IMR-90 (cell line): ENCODE measurements at regions of chr6 and their contacts with region 1.

Region 1: GRCh38 chr6:28443112-28443773 is at the start of gene ZSCAN23:
- DNase-seq: peak; percentile 92
- ATAC-seq: peak; percentile 91
- H3K4me3 ChIP-seq: peak within 1 kb of the TSS; percentile 91
- H3K27ac ChIP-seq: peak within 1 kb of the TSS; percentile 52
- H3K4me1 ChIP-seq: no peaks in the 10 kb centered on the region
- H3K27me3 ChIP-seq: no peaks in the 10 kb centered on the region
- CTCF ChIP-seq: no peak
- POLR2A ChIP-seq: peak; percentile 94
- RAD21 ChIP-seq: no peak
- total RNA-seq, gene ZSCAN23: 5.3 and 8.4 TPM in 2 replicates

Region 2: GRCh38 chr6:28474441-28475219 is 31.4 kb after region 1 on chr6:
- CTCF ChIA-PET with region 1: no interaction called
- POLR2A ChIA-PET with region 1: no interaction called
- dilution Hi-C with region 1: no loop called
- in situ Hi-C with region 1: no loop called
- intact Hi-C with region 1: loop called (anchors 2 kb)
- DNase-seq: peak; percentile 92
- ATAC-seq: peak; percentile 98
- H3K4me3 ChIP-seq: peak overlapping the region; percentile 72
- H3K27ac ChIP-seq: no peak overlapping the region
- H3K4me1 ChIP-seq: no peaks in the 10 kb centered on the region
- H3K27me3 ChIP-seq: peaks cover 7% of the 10 kb centered on the region
- CTCF ChIP-seq: no peak
- POLR2A ChIP-seq: no peak
- RAD21 ChIP-seq: no peak